HEK293T (cell line): ENCODE measurements at regions of chr9 and their contacts with region 1.

Region 1: DNA sequence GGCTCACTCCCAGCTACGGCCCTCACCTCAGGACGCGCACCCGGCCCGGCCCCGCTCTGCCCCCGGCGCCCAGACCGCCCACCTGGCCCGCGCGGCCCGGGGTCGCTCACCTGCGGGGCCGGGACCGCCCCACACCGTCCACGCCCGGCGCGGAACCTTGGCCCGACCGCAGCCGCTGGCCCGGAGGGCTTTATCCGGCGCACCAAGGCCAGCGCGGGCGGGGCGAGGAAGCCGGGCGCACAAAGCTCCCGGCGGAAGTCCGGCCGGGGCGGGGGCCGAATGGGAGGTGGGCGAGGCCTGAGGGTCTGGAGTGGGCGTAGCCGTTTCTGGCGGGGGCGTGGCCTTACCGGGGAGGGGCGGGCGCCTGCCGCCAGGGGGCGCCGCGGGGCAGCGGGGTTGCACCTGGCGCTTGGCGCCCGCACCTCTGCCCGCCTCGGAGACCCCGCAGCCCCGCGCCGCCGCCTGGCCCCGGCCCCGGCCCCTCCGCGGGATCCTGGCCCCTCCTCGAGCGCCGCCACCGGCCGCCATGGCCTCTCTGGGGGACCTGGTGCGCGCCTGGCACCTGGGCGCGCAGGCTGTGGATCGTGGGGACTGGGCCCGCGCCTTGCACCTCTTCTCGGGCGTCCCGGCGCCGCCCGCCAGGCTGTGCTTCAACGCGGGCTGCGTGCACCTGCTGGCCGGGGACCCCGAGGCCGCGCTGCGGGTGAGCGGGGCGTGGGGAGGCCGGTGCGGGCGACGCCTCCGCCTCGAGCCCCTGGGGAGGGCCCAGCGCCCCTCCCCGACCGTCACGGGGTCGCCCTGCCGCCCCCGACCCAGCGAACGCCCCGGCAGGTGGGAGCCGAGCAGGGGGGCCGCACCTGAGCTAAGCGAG is at the starts of genes EXD3 and NOXA1:
- DNase-seq: peak; percentile 99

Region 2: GRCh38 chr9:137302176-137302994 is 120.9 kb before region 1 on chr9 and contains the start of gene NRARP:
- CTCF ChIA-PET with region 1: interaction called, 4 read pairs
- POLR2A ChIA-PET with region 1: interaction called, 18 read pairs
- DNase-seq: peak; percentile 90

Region 3: DNA sequence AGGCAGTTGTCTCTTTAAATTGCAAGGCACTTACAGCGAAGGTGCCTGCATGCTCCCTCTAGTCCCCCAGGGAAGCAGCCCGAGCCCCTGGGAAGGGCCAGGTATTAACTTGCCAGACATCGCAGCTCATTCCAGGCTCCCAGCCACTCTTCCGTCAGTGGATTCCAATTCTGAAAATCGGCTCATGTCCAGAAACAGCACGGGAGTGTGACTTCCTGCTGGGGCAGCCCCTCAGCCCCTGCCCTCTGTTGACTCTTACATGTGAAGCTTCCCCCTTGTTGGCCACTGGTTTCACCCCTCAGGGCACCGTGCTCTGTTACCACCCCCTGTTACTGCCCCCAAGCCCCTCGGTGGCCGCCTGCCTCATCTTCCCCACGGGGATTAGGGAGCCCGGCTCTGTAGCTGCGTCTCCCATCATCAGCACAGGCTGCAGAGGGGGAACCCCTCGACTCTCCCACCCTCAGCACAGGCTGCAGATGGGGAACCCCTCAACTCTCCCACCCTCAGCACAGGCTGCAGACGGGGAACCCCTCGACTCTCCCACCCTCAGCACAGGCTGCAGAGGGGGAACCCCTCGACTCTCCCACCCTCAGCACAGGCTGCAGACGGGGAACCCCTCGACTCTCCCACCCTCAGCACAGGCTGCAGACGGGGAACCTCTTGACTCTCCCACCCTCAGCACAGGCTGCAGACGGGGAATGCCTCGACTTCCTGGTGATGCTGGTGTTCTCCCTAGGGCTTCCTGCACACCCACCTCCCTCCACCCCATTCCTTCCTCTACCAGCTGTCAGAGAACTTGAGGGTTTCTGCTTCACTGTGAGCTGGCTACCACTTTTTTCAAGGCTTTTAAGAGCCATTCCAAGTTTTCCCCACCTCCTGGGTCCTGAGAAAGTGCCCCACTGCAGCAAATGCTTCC is 443.2 kb after region 1 on chr9:
- CTCF ChIA-PET with region 1: no interaction called
- POLR2A ChIA-PET with region 1: no interaction called
- DNase-seq: no peak